Activated T-helper 1 cell treated with anti-CD3 and anti-CD28 coated beads, Interleukin-12 subunit alpha, Interleukin-12 subunit beta, Interleukin-2, Interleukin-4 antibody, amounts not matched to agents 30 ng/mL and 10 ng/mL and 1 ng/mL, durations not matched to agents 14 hours and 24 hours and 36 hours (primary cell): ENCODE measurements at regions of chr17 and their contacts with region 1.

Region 1: DNA sequence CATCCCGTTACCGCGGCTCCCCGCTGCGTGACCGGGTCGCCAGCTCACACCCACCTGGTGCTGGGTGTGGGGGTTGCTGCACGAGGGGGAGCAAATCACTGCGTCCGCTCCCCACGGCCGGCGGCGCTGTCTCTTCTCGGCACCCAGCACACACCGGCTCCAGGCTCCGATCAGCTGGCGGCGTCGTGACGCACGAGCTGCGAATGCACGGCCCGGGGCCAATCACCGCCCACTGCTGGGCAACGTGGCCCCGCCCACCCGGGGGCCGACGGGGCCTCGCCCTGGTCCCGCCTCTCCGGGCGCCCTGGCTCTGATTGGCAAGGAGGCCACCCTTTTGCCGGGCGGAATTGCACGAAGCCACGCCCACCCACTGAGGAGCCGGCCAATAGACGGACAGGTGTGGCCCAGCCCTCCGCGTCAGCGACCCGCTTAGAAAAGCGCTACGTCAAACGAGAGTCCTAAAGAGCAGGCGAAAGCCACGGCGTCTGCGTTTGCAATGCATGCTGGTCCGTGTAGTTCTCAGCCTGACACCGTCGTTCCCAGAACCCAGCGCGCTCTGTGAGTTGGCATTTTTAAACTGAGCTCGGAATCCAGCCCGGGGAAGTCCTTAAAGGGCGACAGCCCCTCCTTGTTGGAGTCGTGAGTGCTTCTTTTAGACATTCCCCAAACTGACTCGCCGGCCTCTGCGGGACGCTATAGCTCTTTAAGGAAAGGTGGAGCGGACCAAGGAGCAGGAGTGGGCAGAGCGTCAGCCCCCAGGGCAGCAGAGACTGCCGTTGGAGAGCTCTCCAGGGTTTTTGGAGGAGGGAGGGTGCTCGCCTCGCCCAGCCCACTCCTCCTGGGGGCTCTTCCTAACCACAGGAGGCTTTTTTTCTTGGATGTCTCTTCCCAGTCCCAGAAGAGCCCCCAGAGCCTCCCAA is 6.2 kb upstream of the TLCD2 start:
- DNase-seq: peak; percentile 100
- H3K4me3 Mint-ChIP-seq: peak overlapping the region; percentile 97
- H3K27ac Mint-ChIP-seq: peak overlapping the region; percentile 98
- H3K4me1 Mint-ChIP-seq: peaks cover 26% of the 10 kb centered on the region
- H3K27me3 Mint-ChIP-seq: peaks cover 3% of the 10 kb centered on the region

Region 2: GRCh38 chr17:1561400-1562175 is 154.7 kb before region 1 on chr17:
- intact Hi-C with region 1: loop called (anchors 1 kb)
- DNase-seq: peak; percentile 27
- H3K4me3 Mint-ChIP-seq: peak overlapping the region; percentile 88
- H3K27ac Mint-ChIP-seq: peak overlapping the region; percentile 61
- H3K4me1 Mint-ChIP-seq: peaks cover 40% of the 10 kb centered on the region
- H3K27me3 Mint-ChIP-seq: peaks cover 11% of the 10 kb centered on the region

Region 3: DNA sequence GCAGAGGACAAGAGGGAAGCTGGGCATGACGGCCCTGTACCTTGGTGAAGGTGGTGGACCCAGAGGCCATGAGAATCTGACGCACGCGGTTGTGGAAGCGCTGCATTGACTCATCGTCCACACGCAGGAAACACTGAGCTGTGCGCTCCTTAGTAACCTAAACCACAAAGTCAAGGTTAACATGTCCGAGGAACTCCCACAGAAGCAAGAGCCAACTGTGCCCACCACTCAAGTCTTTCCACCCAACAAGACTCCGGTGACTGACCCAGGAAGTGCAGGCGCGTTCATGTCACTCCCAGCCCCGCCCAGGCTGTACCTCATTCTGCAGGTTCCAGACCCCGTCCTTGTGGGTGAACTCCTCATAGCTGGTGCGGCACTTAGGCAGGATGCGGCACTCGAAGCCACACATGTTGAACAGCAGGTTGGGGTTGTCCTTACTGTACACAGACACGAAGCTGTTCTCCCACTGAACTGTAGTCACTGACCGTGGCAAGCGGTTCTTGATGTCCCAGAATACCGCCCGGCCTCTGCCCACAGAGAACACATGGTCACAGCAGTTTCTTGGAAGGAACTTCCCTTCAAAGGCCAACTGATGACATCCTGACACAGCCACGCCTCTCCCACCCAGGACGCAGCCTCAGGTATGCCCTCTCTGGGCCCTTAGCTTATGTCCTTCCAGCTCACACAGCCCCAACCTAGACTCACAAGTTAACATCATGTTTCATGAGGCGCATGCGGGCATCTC is 43.1 kb before region 1 on chr17:
- intact Hi-C with region 1: loop called (anchors 5 kb)
- DNase-seq: no peak
- H3K4me3 Mint-ChIP-seq: no peak overlapping the region
- H3K27ac Mint-ChIP-seq: no peak overlapping the region
- H3K4me1 Mint-ChIP-seq: peaks cover 14% of the 10 kb centered on the region
- H3K27me3 Mint-ChIP-seq: no peaks in the 10 kb centered on the region

Region 4: DNA sequence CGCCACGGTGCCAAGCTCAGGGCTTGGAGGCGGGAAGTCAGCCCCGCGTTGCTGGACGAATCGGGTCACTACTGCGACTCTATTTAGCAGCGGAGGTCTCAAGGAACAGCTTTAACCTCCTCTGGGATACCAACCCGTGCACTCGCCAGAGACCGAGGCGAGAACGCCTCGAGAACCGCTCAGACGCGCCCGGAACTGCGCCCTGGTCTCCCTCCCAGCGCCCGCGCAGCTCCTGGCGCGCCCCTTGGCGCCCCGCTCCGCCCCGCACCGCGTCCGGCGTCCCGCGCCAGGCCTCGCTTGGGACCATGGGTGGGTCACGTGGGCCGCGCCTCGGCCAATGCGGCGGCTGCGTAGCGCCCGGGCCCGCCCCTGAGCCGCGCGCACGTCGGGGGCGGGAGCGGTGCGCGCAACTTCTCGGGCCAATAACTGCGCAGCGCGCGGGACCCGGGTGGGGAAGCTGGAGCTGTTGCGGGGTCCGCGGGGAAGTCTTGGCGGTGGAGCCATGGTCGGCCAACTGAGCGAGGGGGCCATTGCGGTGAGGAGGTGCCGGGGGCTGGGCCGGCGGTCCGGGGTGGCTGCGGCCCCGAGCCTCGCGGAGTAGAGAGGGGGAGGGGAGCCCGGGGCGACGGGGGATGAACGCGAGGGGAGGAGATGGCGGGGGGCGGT is 113.4 kb after region 1 on chr17 and contains the starts of genes RPA1 and SMYD4:
- intact Hi-C with region 1: loop called (anchors 1 kb)
- DNase-seq: peak; percentile 91
- H3K4me3 Mint-ChIP-seq: peak within 1 kb of the TSS; percentile 92
- H3K27ac Mint-ChIP-seq: peak within 1 kb of the TSS; percentile 90
- H3K4me1 Mint-ChIP-seq: peaks cover 50% of the 10 kb centered on the region
- H3K27me3 Mint-ChIP-seq: no peaks in the 10 kb centered on the region
- total RNA-seq, gene RPA1: 266 and 269 TPM in 2 replicates
- total RNA-seq, gene SMYD4: 28.4 and 33.4 TPM in 2 replicates

Region 5: GRCh38 chr17:2029911-2030778 is 313.8 kb after region 1 on chr17 and contains the start of gene DPH1:
- intact Hi-C with region 1: loop called (anchors 1 kb)
- DNase-seq: peak; percentile 85
- H3K4me3 Mint-ChIP-seq: peak within 1 kb of the TSS; percentile 92
- H3K27ac Mint-ChIP-seq: peak within 1 kb of the TSS; percentile 75
- H3K4me1 Mint-ChIP-seq: peaks cover 13% of the 10 kb centered on the region
- H3K27me3 Mint-ChIP-seq: peaks cover 35% of the 10 kb centered on the region
- total RNA-seq, gene DPH1: 49.4 and 61.3 TPM in 2 replicates

Region 6: GRCh38 chr17:2336215-2336851 is 620.0 kb after region 1 on chr17 and contains the start of gene TSR1:
- intact Hi-C with region 1: loop called (anchors 1 kb)
- DNase-seq: peak; percentile 86
- H3K4me3 Mint-ChIP-seq: no peak within 1 kb of the TSS
- H3K27ac Mint-ChIP-seq: peak within 1 kb of the TSS; percentile 94
- H3K4me1 Mint-ChIP-seq: peaks cover 5% of the 10 kb centered on the region
- H3K27me3 Mint-ChIP-seq: no peaks in the 10 kb centered on the region
- total RNA-seq, gene TSR1: 91.3 and 92.9 TPM in 2 replicates